Transverse colon (tissue), 4 donors: ENCODE measurements at regions of chr17 and their contacts with region 1.

Region 1: DNA sequence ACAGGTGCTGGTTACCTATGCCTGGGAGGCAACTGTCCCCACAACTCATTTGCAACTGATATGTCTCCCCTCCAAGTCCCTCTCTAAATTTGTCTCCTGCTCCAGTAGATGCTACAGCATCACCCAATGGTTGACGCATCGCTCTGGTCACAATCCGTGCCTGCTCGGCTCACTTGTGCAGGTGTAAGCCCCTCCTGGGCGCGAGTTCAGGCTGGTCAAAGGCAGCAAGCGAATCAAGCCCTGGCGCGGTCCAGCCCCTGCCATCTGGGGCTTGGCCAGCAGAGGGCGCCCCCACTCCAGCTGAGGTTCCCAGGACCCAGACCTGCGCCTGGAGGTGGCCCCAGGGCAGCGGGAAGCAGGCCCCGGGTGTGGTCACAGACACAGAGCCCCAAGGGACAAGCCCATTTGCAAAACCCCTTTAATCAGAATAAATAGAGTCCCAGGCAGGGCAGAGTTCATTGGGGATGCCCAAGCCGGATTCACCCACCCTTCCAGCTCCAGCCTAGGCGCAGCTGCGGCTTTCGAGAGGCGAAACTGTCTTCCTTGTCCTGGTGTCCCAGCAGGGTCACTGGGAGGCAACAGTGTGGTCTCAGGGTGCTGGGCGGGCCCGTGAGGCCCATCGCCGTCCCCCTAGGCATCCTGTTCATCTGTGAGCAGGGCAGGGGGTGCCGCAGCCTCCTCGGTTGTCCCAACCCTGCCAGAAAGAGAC is 15.9 kb downstream of the TMC6 start:
- DNase-seq: peak; percentile 85
- H3K4me3 ChIP-seq: no peak overlapping the region
- H3K27ac ChIP-seq: peak overlapping the region in 1 of 4 donors; percentile 0
- H3K4me1 ChIP-seq: peaks cover 0 to 11% (median 7%) of the 10 kb centered on the region in 4 donors
- H3K27me3 ChIP-seq: no peaks in the 10 kb centered on the region
- CTCF ChIP-seq: peak; percentile 98 to 100 (median 99)
- EP300 ChIP-seq: no peak
- POLR2A ChIP-seq: peak; percentile 2

Region 2: GRCh38 chr17:78154903-78155811 is 42.5 kb after region 1 on chr17:
- in situ Hi-C with region 1: no loop called
- intact Hi-C with region 1: no loop called
- DNase-seq: peak; percentile 59
- H3K4me3 ChIP-seq: no peak overlapping the region
- H3K27ac ChIP-seq: peak overlapping the region in 3 of 4 donors; percentile 44 to 60 (median 53)
- H3K4me1 ChIP-seq: peaks cover 0 to 35% (median 21%) of the 10 kb centered on the region in 4 donors
- H3K27me3 ChIP-seq: no peaks in the 10 kb centered on the region
- CTCF ChIP-seq: no peak
- EP300 ChIP-seq: no peak
- POLR2A ChIP-seq: no peak

Region 3: GRCh38 chr17:78176548-78177025 is 63.9 kb after region 1 on chr17:
- in situ Hi-C with region 1: loop called in 2 of 4 experiments (anchors 10 kb)
- intact Hi-C with region 1: loop called (anchors 5 kb)
- DNase-seq: peak; percentile 83
- H3K4me3 ChIP-seq: no peak overlapping the region
- H3K27ac ChIP-seq: peak overlapping the region; percentile 85 to 95 (median 92)
- H3K4me1 ChIP-seq: peaks cover 53 to 77% (median 68%) of the 10 kb centered on the region in 4 donors
- H3K27me3 ChIP-seq: no peaks in the 10 kb centered on the region
- CTCF ChIP-seq: peak; percentile 91 to 94 (median 92)
- EP300 ChIP-seq: no peak
- POLR2A ChIP-seq: no peak

Region 4: DNA sequence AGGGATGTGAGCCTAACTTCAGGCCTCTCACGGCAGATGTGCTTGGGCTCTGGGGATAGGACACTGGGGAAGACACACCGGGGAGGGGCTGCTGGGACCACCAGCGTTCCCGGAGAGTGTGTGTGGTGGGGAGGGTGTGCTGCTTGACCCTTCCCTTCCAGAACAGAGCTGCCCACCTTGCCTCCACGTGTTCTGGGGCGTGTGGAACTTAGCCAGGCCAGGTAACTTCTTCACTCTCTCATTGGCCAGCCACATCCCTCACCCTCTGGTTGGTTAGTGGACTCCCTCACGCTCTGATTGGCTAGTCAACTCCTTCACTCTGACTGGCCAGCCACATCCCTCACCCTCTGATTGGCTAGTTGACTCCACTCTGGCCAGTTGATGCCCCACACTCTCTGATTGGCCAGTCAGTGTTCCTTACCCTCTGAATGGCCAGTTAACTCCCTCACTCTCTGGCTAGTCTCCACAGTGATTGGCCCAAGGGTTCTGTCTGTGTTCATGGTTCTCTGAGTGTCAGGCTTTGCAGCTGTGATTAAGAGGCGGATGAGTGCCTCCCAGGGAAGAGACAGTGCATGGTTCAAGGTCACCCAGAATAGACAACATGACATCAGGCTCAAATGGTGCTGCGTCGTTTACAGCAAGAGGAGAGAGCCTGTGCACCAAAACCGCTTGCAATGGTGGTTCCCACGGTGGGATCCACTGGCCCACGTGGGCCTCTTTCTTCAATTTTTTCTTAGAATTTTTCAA is 128.8 kb after region 1 on chr17:
- in situ Hi-C with region 1: loop called in 3 of 4 experiments (anchors 10 kb)
- intact Hi-C with region 1: no loop called
- DNase-seq: no peak
- H3K4me3 ChIP-seq: no peak overlapping the region
- H3K27ac ChIP-seq: no peak overlapping the region
- H3K4me1 ChIP-seq: no peaks in the 10 kb centered on the region
- H3K27me3 ChIP-seq: no peaks in the 10 kb centered on the region
- CTCF ChIP-seq: no peak
- EP300 ChIP-seq: no peak
- POLR2A ChIP-seq: no peak

Region 5: GRCh38 chr17:78250891-78251794 is 138.5 kb after region 1 on chr17:
- in situ Hi-C with region 1: loop called in 3 of 4 experiments (anchors 10 kb)
- intact Hi-C with region 1: loop called (anchors 10 kb)
- DNase-seq: peak; percentile 87
- H3K4me3 ChIP-seq: no peak overlapping the region
- H3K27ac ChIP-seq: peak overlapping the region; percentile 15 to 80 (median 59)
- H3K4me1 ChIP-seq: peaks cover 0 to 30% (median 24%) of the 10 kb centered on the region in 4 donors
- H3K27me3 ChIP-seq: peaks cover 3% of the 10 kb centered on the region
- CTCF ChIP-seq: peak; percentile 98 to 99 (median 99)
- EP300 ChIP-seq: no peak
- POLR2A ChIP-seq: no peak

Region 6: GRCh38 chr17:78378225-78379130 is 265.8 kb after region 1 on chr17 and contains the start of gene PGS1:
- in situ Hi-C with region 1: no loop called
- intact Hi-C with region 1: no loop called
- DNase-seq: peak; percentile 85
- H3K4me3 ChIP-seq: peak within 1 kb of the TSS; percentile 80 to 98 (median 92)
- H3K27ac ChIP-seq: peak within 1 kb of the TSS; percentile 90 to 93 (median 90)
- H3K4me1 ChIP-seq: peaks cover 19 to 47% (median 41%) of the 10 kb centered on the region in 4 donors
- H3K27me3 ChIP-seq: no peaks in the 10 kb centered on the region
- CTCF ChIP-seq: no peak
- EP300 ChIP-seq: no peak
- POLR2A ChIP-seq: peak; percentile 82
- total RNA-seq, gene PGS1: 32.1 to 77.6 (median 60.1) TPM

Region 7: GRCh38 chr17:78532922-78533640 is 420.4 kb after region 1 on chr17:
- in situ Hi-C with region 1: no loop called
- intact Hi-C with region 1: no loop called
- DNase-seq: no peak
- H3K4me3 ChIP-seq: no peak overlapping the region
- H3K27ac ChIP-seq: no peak overlapping the region
- H3K4me1 ChIP-seq: peaks cover 0 to 16% (median 7%) of the 10 kb centered on the region in 4 donors
- H3K27me3 ChIP-seq: peaks cover 4% of the 10 kb centered on the region
- CTCF ChIP-seq: no peak
- EP300 ChIP-seq: no peak
- POLR2A ChIP-seq: no peak